ENCODE measurements at regions of chr1 and their contacts with region 1.

Region 1: DNA sequence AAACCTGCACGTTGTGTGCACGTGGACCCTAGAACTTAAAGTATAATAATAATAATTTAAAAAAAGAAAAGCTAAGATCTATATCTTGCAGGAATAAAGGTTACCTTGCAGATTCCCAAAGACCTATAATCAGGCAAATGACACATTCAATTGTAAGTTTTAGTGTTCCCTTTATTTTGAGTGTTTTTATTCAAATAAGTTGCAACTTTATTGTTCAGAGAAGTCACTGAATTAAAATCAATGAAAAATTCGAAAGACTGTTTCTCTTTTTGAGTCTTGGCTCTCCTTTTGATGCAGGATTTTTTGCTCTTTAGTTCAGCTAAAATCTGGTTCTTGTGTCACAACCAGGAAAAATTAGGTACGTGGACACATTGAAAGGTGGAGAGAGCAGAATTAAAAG is 27.8 kb upstream of the TNFSF4 start:
- DNase-seq: no peak
- H3K4me3 ChIP-seq: no peak overlapping the region
- CTCF ChIP-seq: no peak
- POLR2A ChIP-seq: no peak

Region 2: GRCh38 chr1:171934664-171935063 is 1300.2 kb before region 1 on chr1:
- intact Hi-C with region 1: loop called (anchors 5 kb)
- DNase-seq: no peak
- H3K4me3 ChIP-seq: no peak overlapping the region
- CTCF ChIP-seq: no peak
- POLR2A ChIP-seq: no peak

Region 3: GRCh38 chr1:174301295-174302077 is 1066.6 kb after region 1 on chr1:
- intact Hi-C with region 1: no loop called
- DNase-seq: no peak
- H3K4me3 ChIP-seq: no peak overlapping the region
- CTCF ChIP-seq: no peak
- POLR2A ChIP-seq: no peak